PC-9 (cell line): ENCODE measurements at regions of chr12 and their contacts with region 1.

Region 1: GRCh38 chr12:16685107-16685506 is 79.1 kb upstream of the LMO3 start:
- DNase-seq: no peak
- H3K4me3 ChIP-seq: no peak overlapping the region
- H3K27ac ChIP-seq: no peak overlapping the region
- H3K4me1 ChIP-seq: no peaks in the 10 kb centered on the region
- H3K27me3 ChIP-seq: no peaks in the 10 kb centered on the region
- CTCF ChIP-seq: peak; percentile 60

Region 2: DNA sequence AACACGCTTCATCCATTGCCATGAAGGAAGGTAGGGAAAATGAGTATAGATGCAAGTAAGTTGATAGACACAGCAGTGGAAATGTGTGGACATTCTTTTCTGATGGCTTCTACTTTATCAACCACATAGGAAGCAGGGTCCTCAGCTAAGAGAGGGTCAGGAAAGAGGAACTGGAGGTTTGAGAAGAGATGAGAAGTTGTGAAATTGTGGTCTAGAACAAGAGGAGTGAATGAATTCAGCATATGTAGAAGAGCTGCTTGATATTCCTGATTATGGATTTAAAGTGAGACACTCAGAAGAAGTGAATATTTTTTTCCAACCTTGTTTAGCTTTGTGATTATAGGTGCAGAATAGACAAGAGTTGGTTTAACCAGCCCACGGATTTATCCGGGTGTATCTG is 536.2 kb before region 1 on chr12:
- CTCF ChIA-PET with region 1: no interaction called
- POLR2A ChIA-PET with region 1: interaction called, 12 read pairs
- intact Hi-C with region 1: no loop called
- DNase-seq: no peak
- H3K4me3 ChIP-seq: no peak overlapping the region
- H3K27ac ChIP-seq: no peak overlapping the region
- H3K4me1 ChIP-seq: no peaks in the 10 kb centered on the region
- H3K27me3 ChIP-seq: 0 out of 2 replicates have a peak, but pooled peaks cover 10% of the 10 kb centered on the region
- CTCF ChIP-seq: no peak

Region 3: GRCh38 chr12:16165506-16165905 is 519.6 kb before region 1 on chr12:
- CTCF ChIA-PET with region 1: no interaction called
- POLR2A ChIA-PET with region 1: no interaction called
- intact Hi-C with region 1: loop called (anchors 1 kb)
- DNase-seq: peak in 1 of 2 experiments; percentile 53
- H3K4me3 ChIP-seq: no peak overlapping the region
- H3K27ac ChIP-seq: no peak overlapping the region
- H3K4me1 ChIP-seq: no peaks in the 10 kb centered on the region
- H3K27me3 ChIP-seq: no peaks in the 10 kb centered on the region
- CTCF ChIP-seq: peak; percentile 80